GM12878 (cell line): ENCODE measurements at regions of chr7 and their contacts with region 1.

Region 1: GRCh38 chr7:28830846-28831245 is 127.3 kb downstream of the TRIL start:
- DNase-seq: no peak
- ATAC-seq: no peak
- H3K4me3 ChIP-seq: no peak overlapping the region
- H3K27ac ChIP-seq: no peak overlapping the region
- H3K4me1 ChIP-seq: no peaks in the 10 kb centered on the region
- H3K27me3 ChIP-seq: no peaks in the 10 kb centered on the region
- CTCF ChIP-seq: no peak
- EP300 ChIP-seq: no peak
- POLR2A ChIP-seq: no peak
- RAD21 ChIP-seq: no peak

Region 2: GRCh38 chr7:28815369-28815927 is 15.4 kb before region 1 on chr7:
- CTCF ChIA-PET with region 1: interaction called, 3 read pairs
- POLR2A ChIA-PET with region 1: interaction called, 10 read pairs
- RAD21 ChIA-PET with region 1: no interaction called
- SMC1A ChIA-PET with region 1: interaction called, 13 read pairs
- in situ Hi-C with region 1: no loop called
- intact Hi-C with region 1: no loop called
- DNase-seq: peak; percentile 34
- ATAC-seq: peak; percentile 69
- H3K4me3 ChIP-seq: peak overlapping the region; percentile 14; the same call in 1 of the 2 replicates
- H3K27ac ChIP-seq: peak overlapping the region; percentile 80
- H3K4me1 ChIP-seq: peaks cover 37% of the 10 kb centered on the region
- H3K27me3 ChIP-seq: no peaks in the 10 kb centered on the region
- CTCF ChIP-seq: no peak
- EP300 ChIP-seq: no peak
- POLR2A ChIP-seq: no peak
- RAD21 ChIP-seq: no peak

Region 3: GRCh38 chr7:29102548-29103151 is 271.8 kb after region 1 on chr7:
- CTCF ChIA-PET with region 1: no interaction called
- POLR2A ChIA-PET with region 1: no interaction called
- RAD21 ChIA-PET with region 1: no interaction called
- SMC1A ChIA-PET with region 1: no interaction called
- in situ Hi-C with region 1: no loop called
- intact Hi-C with region 1: no loop called
- DNase-seq: no peak
- ATAC-seq: peak; percentile 61
- H3K4me3 ChIP-seq: no peak overlapping the region
- H3K27ac ChIP-seq: no peak overlapping the region
- H3K4me1 ChIP-seq: no peaks in the 10 kb centered on the region
- H3K27me3 ChIP-seq: peaks cover 0 to under 1% of the 10 kb centered on the region in 2 experiments; a peak in 2 of 4 replicates
- CTCF ChIP-seq: peak; percentile 44 to 64 (median 46)
- EP300 ChIP-seq: no peak
- POLR2A ChIP-seq: no peak
- RAD21 ChIP-seq: peak; percentile 58